Adrenal gland (tissue), 19 donors: ENCODE measurements at regions of chr4 and their contacts with region 1.

Region 1: GRCh38 chr4:139295206-139295941 is 5.9 kb upstream of the NAA15 start:
- DNase-seq: peak; percentile 95 to 99 (median 98)
- H3K4me3 ChIP-seq: peak overlapping the region; percentile 43 to 88 (median 78)
- H3K27ac ChIP-seq: peak overlapping the region; percentile 67 to 94 (median 86)
- H3K4me1 ChIP-seq: peaks cover 11 to 33% of the 10 kb centered on the region in 2 donors
- H3K27me3 ChIP-seq: no peaks in the 10 kb centered on the region
- CTCF ChIP-seq: peak; percentile 90 to 98 (median 95)
- POLR2A ChIP-seq: peak; percentile 8 to 60

Region 2: DNA sequence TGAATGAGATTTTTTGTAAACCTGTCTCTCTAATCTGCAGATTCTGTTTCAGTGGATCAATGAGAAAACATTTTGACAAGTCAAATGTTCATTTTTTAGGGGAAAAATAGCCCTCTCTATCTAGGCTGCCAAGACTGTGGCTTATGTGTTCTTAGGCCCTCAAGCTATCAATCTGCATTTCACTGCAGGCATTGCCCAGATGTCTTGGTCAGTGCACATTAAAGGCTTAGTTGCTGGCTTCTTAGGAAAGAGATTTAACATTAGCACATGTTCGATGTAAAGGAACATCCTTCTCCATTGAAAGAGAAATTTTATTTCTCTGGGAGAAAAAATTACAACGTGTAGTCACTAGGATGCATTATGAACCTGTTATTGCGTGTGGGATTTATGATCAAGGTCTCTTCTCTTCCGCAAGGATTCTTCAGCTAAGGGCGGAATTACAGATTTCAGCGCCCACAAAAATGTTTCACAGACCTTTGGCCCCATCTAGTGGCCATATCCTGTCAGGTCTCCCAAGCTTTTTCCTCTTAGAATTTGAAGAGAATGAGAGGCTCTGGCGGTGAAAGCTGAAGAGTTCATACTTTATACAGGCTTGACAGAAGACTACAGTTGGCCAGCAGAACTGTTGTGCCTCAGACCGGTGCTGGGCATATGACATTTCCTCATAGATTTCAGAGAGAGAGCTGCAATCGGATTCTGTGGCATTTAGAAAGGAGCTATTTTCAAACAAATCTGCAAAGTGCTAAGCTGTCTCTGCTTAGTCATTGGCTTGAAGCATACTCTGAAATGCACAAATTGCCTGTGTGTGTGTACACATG is 424.4 kb before region 1 on chr4:
- intact Hi-C with region 1: no loop called
- DNase-seq: peak; percentile 39 to 89 (median 62)
- H3K4me3 ChIP-seq: no peak overlapping the region
- H3K27ac ChIP-seq: no peak overlapping the region
- H3K4me1 ChIP-seq: no peaks in the 10 kb centered on the region
- H3K27me3 ChIP-seq: no peaks in the 10 kb centered on the region
- CTCF ChIP-seq: peak; percentile 79 to 92 (median 83)
- POLR2A ChIP-seq: no peak

Region 3: GRCh38 chr4:139099366-139099982 is 195.9 kb before region 1 on chr4:
- intact Hi-C with region 1: loop called (anchors 5 to 10 kb)
- DNase-seq: peak; percentile 71 to 84 (median 73)
- H3K4me3 ChIP-seq: no peak overlapping the region
- H3K27ac ChIP-seq: no peak overlapping the region
- H3K4me1 ChIP-seq: no peaks in the 10 kb centered on the region
- H3K27me3 ChIP-seq: no peaks in the 10 kb centered on the region
- CTCF ChIP-seq: peak; percentile 79 to 92 (median 83)
- POLR2A ChIP-seq: no peak

Region 4: DNA sequence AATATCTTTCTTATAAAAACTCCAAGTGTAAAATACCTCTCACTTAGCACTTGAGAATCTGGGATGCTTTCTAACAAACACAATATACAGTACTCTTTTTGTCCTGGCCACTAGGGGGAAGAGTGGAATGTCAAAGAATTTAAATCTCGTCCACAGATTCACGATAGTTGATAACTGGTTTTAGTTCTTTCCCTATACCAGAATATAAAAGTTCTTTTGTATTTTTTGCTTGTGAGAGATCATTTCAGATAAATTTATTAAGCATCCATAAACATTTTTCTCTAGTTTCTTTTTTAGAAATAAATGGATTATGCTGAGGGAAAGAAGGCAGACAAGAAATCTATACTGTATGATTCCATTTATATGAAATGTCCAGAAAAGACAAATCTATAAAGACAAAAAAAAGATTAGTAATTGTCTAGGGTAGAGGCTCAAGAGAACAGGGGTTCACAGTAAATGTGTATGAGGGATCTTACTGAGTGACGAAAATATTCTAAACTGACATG is 65.8 kb before region 1 on chr4:
- intact Hi-C with region 1: loop called (anchors 5 kb)
- DNase-seq: no peak
- H3K4me3 ChIP-seq: no peak overlapping the region
- H3K27ac ChIP-seq: no peak overlapping the region
- H3K4me1 ChIP-seq: peaks cover 0 to 4% of the 10 kb centered on the region in 2 donors
- H3K27me3 ChIP-seq: no peaks in the 10 kb centered on the region
- CTCF ChIP-seq: peak; percentile 71 to 86 (median 79)
- POLR2A ChIP-seq: no peak